ENCODE measurements at regions of chr18 and their contacts with region 1.

Region 1: DNA sequence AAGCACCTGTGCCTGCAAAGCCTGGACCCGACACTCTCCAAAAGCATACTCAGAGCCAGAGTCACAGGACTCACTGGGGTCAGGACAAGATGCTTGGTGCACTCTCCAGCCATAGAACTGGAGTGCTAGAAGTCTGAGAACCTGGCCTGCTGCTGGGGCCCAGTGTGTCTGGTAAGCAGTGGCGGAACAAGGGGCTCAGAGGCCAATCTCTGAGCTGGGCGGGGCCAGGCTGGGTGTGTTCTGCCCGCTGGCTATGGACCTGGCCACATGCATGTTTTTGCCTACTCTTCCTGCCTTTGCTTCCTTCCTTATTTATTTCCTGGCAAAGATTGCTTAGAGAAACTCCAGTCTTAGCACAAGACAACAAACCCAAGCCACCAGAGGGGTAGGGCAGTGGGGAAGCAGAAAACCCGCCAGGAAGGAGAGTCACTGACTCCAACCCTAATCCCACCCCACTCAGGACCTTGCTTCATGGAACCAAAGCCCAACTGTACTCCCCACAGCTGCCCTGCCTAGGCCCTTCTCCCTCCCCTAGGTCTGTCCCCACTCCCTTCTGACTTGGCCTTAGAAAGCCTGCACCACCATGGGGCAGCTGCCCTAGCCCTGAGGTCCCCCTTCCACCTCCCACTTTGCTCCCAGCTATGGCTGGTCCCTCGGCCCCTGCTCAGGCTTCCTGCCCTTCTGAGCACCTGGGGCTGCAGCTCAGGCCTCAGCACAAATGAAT is 315.5 kb downstream of the CELF4 start:
- DNase-seq: peak in 1 of 2 donors; percentile 38
- H3K4me3 ChIP-seq: no peak overlapping the region
- H3K27ac ChIP-seq: no peak overlapping the region
- H3K4me1 ChIP-seq: no peaks in the 10 kb centered on the region
- H3K27me3 ChIP-seq: peaks cover 4 to 5% of the 10 kb centered on the region in 2 donors
- CTCF ChIP-seq: no peak
- POLR2A ChIP-seq: no peak

Region 2: DNA sequence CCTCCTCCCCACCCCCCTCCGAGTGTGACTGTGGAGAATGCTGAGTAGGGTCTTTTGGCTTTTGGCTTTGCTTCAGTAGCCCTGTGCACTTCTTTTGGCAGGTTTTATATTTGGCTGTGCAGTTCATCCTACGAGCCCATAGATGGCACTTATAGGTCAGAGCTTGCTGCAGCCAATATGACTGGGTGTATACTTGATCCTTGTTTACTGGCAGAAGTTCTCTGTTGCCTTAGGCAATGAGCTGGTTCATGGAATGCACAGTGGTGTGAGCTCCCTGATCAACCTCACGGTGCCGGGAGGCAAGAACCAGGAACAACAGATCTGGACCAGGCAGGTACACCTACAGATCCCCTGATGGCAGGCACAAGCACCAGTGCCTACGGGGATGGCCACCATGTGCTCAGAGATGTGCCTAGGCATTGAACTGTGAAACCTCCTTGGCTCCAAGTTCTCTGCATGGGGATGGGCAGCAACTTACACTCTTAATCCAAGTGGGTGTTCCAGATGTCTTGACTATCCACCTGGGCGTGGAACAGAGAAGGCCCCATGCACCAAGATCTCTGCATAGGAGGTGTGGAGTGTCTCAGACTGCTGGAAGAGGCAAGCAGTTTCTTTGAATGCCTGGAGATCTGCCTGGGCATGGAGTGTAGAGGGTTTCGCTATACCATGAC is 230.8 kb before region 1 on chr18:
- intact Hi-C with region 1: no loop called
- DNase-seq: no peak
- H3K4me3 ChIP-seq: no peak overlapping the region
- H3K27ac ChIP-seq: no peak overlapping the region
- H3K4me1 ChIP-seq: no peaks in the 10 kb centered on the region
- H3K27me3 ChIP-seq: no peaks in the 10 kb centered on the region
- CTCF ChIP-seq: no peak
- POLR2A ChIP-seq: no peak

Region 3: GRCh38 chr18:37460604-37461003 is 210.5 kb after region 1 on chr18:
- intact Hi-C with region 1: loop called (anchors 5 kb)
- DNase-seq: no peak
- H3K4me3 ChIP-seq: no peak overlapping the region
- H3K27ac ChIP-seq: no peak overlapping the region
- H3K4me1 ChIP-seq: no peaks in the 10 kb centered on the region
- H3K27me3 ChIP-seq: no peaks in the 10 kb centered on the region
- CTCF ChIP-seq: no peak
- POLR2A ChIP-seq: no peak

Region 4: DNA sequence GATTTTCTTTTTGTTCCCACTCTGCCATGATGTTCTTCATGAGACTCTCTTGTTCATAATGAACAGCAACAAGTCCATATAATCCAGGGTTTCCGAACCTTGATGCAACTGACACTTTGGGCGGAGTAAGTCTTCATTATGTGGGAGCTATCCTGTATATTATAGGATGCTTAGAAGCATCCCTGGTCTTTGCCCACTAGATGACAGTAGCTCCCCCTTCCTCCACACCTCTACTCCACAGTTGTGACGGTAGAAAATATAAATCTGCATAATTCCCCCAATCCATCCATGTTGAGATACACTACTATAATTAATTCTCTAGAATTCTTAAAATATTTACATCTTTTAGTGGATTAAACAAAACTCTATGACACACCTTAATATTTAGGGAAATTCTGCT is 797.8 kb after region 1 on chr18:
- intact Hi-C with region 1: no loop called
- DNase-seq: no peak
- H3K4me3 ChIP-seq: no peak overlapping the region
- H3K27ac ChIP-seq: no peak overlapping the region
- H3K4me1 ChIP-seq: no peaks in the 10 kb centered on the region
- H3K27me3 ChIP-seq: no peaks in the 10 kb centered on the region
- CTCF ChIP-seq: no peak
- POLR2A ChIP-seq: no peak

Measured in breast epithelium (tissue), 4 donors.